GM18951 (cell line): ENCODE measurements at regions of chr7 and their contacts with region 1.

Region 1: GRCh38 chr7:48904975-48905374 is 19.4 kb upstream of the CDC14C start:
- POLR2A ChIP-seq: no peak

Region 2: DNA sequence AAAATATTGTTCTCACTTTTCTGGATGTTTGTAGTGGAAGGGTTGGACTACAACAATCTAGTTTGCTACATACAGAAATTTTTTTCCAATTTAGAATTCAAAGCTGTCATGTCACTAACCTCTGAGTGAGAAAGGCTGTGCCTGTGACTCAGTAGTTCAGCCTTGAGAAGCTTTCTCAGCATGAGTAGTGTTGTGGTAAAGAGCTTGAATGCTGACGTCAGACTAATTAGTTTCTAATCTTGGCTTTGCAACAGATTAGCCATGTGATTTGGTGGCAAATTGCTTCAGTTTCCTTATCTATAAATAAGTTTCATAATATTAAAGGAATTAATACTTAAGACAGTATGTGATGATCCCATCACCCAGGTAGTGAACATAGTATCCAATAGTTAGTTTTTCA is 649.9 kb before region 1 on chr7:
- in situ Hi-C with region 1: no loop called
- POLR2A ChIP-seq: no peak

Region 3: GRCh38 chr7:48402721-48403120 is 502.3 kb before region 1 on chr7:
- in situ Hi-C with region 1: no loop called
- POLR2A ChIP-seq: no peak

Region 4: DNA sequence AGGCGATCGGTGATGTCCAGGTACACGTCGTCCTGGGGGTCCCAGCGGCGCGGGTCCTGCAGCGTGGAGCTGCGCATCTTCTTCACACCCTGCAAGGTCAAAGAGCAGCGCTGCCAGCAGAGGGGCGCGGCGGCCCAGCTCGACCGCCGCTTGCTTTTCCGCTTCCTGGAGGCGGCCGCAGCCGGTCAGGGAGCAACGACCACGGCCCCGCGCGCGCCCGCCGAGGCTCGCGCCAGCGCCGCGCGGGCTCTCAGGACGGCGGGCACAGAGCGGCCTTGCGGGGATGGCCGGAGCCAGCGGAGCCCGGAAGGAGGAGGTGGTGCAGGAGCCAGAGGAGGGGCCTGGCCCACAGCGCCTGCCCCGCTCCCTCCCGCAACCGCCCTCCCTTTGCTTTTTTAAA is 57.1 kb before region 1 on chr7:
- in situ Hi-C with region 1: loop called (anchors 10 kb)
- POLR2A ChIP-seq: no peak

Region 5: GRCh38 chr7:49091519-49091918 is 186.5 kb after region 1 on chr7:
- in situ Hi-C with region 1: no loop called
- POLR2A ChIP-seq: no peak